Heart left ventricle (tissue), 16 donors: ENCODE measurements at regions of chr3 and their contacts with region 1.

Region 1: DNA sequence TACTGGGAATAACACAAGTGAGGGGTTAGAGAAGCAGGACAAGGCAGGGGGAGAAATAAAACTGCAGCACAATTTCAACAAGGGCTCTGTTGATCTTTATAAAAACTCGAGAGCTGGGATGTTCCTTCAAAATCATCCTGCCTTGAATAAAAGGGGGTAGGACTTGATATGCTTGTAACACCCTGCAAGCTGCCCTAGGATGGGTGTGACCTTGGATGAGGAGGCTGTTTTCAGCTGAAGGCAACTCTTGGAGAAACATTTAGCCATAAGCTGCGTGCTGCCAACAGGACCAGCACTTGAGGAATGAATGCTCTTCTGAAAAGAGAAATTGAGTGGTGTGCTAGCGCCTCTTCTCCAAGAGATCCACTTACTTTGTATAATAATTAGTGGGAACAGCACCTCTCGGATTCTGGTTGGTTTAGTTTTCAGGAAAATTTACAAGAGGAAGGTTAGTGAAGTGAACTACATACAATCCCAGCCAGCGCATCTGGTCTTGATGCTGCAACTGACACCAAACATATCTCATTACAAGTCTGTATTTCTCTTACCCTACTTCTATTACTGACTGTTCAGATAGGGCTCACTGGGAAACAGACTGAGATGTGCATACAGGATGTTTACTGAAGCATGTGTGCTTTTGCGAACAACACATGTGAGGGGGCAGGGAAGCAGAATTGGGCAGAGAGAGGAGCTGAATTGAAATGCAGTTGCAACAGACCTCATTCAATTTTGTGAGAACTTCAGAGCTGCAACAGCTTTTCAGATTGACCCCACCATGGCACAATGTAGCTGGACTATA is 643.0 kb upstream of the GOLIM4 start:
- DNase-seq: peak in 1 of 5 donors; percentile 10
- ATAC-seq: no peak
- H3K4me3 ChIP-seq: no peak overlapping the region
- H3K27ac ChIP-seq: no peak overlapping the region
- H3K4me1 ChIP-seq: no peaks in the 10 kb centered on the region
- H3K27me3 ChIP-seq: no peaks in the 10 kb centered on the region
- CTCF ChIP-seq: no peak
- POLR2A ChIP-seq: no peak

Region 2: GRCh38 chr3:168186293-168186983 is 552.3 kb before region 1 on chr3:
- intact Hi-C with region 1: no loop called
- DNase-seq: no peak
- ATAC-seq: no peak
- H3K4me3 ChIP-seq: no peak overlapping the region
- H3K27ac ChIP-seq: no peak overlapping the region
- H3K4me1 ChIP-seq: no peaks in the 10 kb centered on the region
- H3K27me3 ChIP-seq: no peaks in the 10 kb centered on the region
- CTCF ChIP-seq: no peak
- POLR2A ChIP-seq: no peak

Region 3: DNA sequence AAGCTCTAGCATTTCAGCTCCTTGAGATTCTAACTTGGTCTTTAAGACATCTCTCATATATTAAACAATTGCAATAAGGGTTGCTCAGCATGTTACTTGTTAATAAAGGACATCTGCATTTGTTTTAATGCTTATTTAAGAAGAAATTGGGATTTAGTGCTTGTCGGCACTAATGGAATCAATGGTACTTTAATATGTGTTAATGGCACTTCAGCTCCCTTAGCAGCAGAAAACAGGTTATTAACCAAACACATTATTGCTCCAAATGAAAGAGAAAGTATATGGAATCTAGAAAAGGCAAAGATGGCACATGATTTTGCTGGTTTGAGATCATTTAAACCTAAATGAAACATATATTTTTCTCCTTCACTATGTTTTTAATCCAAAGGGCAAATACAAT is 505.7 kb before region 1 on chr3:
- intact Hi-C with region 1: no loop called
- DNase-seq: no peak
- ATAC-seq: no peak
- H3K4me3 ChIP-seq: no peak overlapping the region
- H3K27ac ChIP-seq: no peak overlapping the region
- H3K4me1 ChIP-seq: no peaks in the 10 kb centered on the region
- H3K27me3 ChIP-seq: peaks cover 0 to 34% (median 0%) of the 10 kb centered on the region in 9 donors
- CTCF ChIP-seq: no peak
- POLR2A ChIP-seq: no peak

Region 4: GRCh38 chr3:168647582-168647981 is 91.1 kb before region 1 on chr3:
- intact Hi-C with region 1: no loop called
- DNase-seq: no peak
- ATAC-seq: no peak
- H3K4me3 ChIP-seq: no peak overlapping the region
- H3K27ac ChIP-seq: no peak overlapping the region
- H3K4me1 ChIP-seq: no peaks in the 10 kb centered on the region
- H3K27me3 ChIP-seq: no peaks in the 10 kb centered on the region
- CTCF ChIP-seq: no peak
- POLR2A ChIP-seq: no peak

Region 5: GRCh38 chr3:168752339-168752738 is 13.6 kb after region 1 on chr3:
- intact Hi-C with region 1: loop called in 1 of 10 experiments (anchors 1 kb)
- DNase-seq: no peak
- ATAC-seq: no peak
- H3K4me3 ChIP-seq: no peak overlapping the region
- H3K27ac ChIP-seq: no peak overlapping the region
- H3K4me1 ChIP-seq: no peaks in the 10 kb centered on the region
- H3K27me3 ChIP-seq: no peaks in the 10 kb centered on the region
- CTCF ChIP-seq: no peak
- POLR2A ChIP-seq: no peak